CD8-positive, alpha-beta T cell (primary cell): ENCODE measurements at regions of chr9 and their contacts with region 1.

Region 1: DNA sequence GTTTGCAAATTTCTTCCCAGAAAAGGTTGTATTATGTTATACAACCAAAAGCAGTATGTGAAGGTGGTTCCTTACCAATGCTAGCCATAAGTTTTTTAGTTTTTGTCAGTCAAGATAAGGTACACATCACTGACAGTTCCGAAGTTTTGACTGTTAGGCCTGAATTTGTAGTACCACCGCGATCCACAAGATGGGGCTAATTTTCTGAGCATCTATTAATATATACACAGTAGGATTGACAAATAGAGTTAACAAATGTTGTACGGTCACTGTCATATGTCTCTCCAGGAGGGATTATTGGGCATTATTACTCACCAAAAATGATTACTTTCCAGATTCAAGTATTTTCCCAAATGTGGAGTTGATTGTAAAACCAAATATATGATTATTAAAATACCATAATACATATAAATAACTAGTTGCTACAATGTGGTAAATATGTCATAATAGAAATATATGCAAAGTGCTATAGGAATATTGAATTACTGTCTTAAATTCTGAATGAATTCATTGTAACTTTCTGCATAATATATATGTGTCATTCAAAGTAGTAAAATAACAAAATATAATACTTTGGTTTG is 28.4 kb upstream of the LRRC19 start:
- DNase-seq: peak in 8 of 9 experiments; percentile 1 to 52 (median 36)
- ATAC-seq: no peak
- H3K4me3 ChIP-seq: no peak overlapping the region
- H3K4me3 Mint-ChIP-seq: no peak overlapping the region
- H3K27ac ChIP-seq: no peak overlapping the region
- H3K27ac Mint-ChIP-seq: no peak overlapping the region
- H3K4me1 ChIP-seq: no peaks in the 10 kb centered on the region
- H3K4me1 Mint-ChIP-seq: no peaks in the 10 kb centered on the region
- H3K27me3 ChIP-seq: no peaks in the 10 kb centered on the region
- H3K27me3 Mint-ChIP-seq: no peaks in the 10 kb centered on the region
- CTCF ChIP-seq: peak; percentile 67

Region 2: GRCh38 chr9:26723486-26723885 is 310.4 kb before region 1 on chr9:
- CTCF ChIA-PET with region 1: no interaction called
- POLR2A ChIA-PET with region 1: no interaction called
- intact Hi-C with region 1: no loop called
- DNase-seq: peak in 1 of 9 experiments; percentile 3
- ATAC-seq: no peak
- H3K4me3 ChIP-seq: no peak overlapping the region
- H3K4me3 Mint-ChIP-seq: no peak overlapping the region
- H3K27ac ChIP-seq: no peak overlapping the region
- H3K27ac Mint-ChIP-seq: no peak overlapping the region
- H3K4me1 ChIP-seq: no peaks in the 10 kb centered on the region
- H3K4me1 Mint-ChIP-seq: no peaks in the 10 kb centered on the region
- H3K27me3 ChIP-seq: no peaks in the 10 kb centered on the region
- H3K27me3 Mint-ChIP-seq: peaks cover 4% of the 10 kb centered on the region
- CTCF ChIP-seq: no peak

Region 3: GRCh38 chr9:27019589-27019988 is 14.3 kb before region 1 on chr9:
- CTCF ChIA-PET with region 1: no interaction called
- POLR2A ChIA-PET with region 1: no interaction called
- intact Hi-C with region 1: no loop called
- DNase-seq: no peak
- ATAC-seq: no peak
- H3K4me3 ChIP-seq: no peak overlapping the region
- H3K4me3 Mint-ChIP-seq: no peak overlapping the region
- H3K27ac ChIP-seq: no peak overlapping the region
- H3K27ac Mint-ChIP-seq: no peak overlapping the region
- H3K4me1 ChIP-seq: no peaks in the 10 kb centered on the region
- H3K4me1 Mint-ChIP-seq: no peaks in the 10 kb centered on the region
- H3K27me3 ChIP-seq: no peaks in the 10 kb centered on the region
- H3K27me3 Mint-ChIP-seq: no peaks in the 10 kb centered on the region
- CTCF ChIP-seq: no peak

Region 4: GRCh38 chr9:27485158-27485557 is 451.2 kb after region 1 on chr9:
- CTCF ChIA-PET with region 1: no interaction called
- POLR2A ChIA-PET with region 1: no interaction called
- intact Hi-C with region 1: no loop called
- DNase-seq: peak in 2 of 9 experiments; percentile 8 to 26
- ATAC-seq: no peak
- H3K4me3 ChIP-seq: no peak overlapping the region
- H3K4me3 Mint-ChIP-seq: no peak overlapping the region
- H3K27ac ChIP-seq: no peak overlapping the region
- H3K27ac Mint-ChIP-seq: peak overlapping the region; percentile 39
- H3K4me1 ChIP-seq: peaks cover 12% of the 10 kb centered on the region
- H3K4me1 Mint-ChIP-seq: peaks cover 21% of the 10 kb centered on the region
- H3K27me3 ChIP-seq: no peaks in the 10 kb centered on the region
- H3K27me3 Mint-ChIP-seq: no peaks in the 10 kb centered on the region
- CTCF ChIP-seq: no peak

Region 5: GRCh38 chr9:27548055-27548741 is 514.3 kb after region 1 on chr9:
- CTCF ChIA-PET with region 1: no interaction called
- POLR2A ChIA-PET with region 1: no interaction called
- intact Hi-C with region 1: loop called in 1 of 2 experiments (anchors 5 kb)
- DNase-seq: peak in 2 of 9 experiments; percentile 11 to 19
- ATAC-seq: no peak
- H3K4me3 ChIP-seq: no peak overlapping the region
- H3K4me3 Mint-ChIP-seq: no peak overlapping the region
- H3K27ac ChIP-seq: no peak overlapping the region
- H3K27ac Mint-ChIP-seq: no peak overlapping the region
- H3K4me1 ChIP-seq: no peaks in the 10 kb centered on the region
- H3K4me1 Mint-ChIP-seq: no peaks in the 10 kb centered on the region
- H3K27me3 ChIP-seq: no peaks in the 10 kb centered on the region
- H3K27me3 Mint-ChIP-seq: no peaks in the 10 kb centered on the region
- CTCF ChIP-seq: peak; percentile 20